ENCODE measurements at regions of chr4 and their contacts with region 1.

Region 1: DNA sequence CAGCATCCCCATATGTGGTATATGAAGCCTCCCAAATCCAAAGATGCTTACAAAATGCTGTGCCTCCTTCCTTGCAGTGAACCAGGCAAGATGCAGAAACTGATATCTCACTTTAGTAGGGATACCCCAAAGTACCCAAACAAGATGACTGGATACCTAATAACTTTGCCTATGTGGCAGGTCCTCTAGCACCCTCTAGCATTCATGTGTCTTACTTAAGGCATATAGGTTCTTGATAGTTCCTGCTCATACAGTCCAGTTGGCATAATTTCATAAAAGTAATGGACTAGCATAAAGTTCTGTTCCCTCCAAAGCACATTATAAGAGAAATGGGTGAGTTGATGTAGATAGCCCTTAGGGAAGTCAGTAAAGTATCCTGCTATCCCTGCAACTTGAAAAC is 36.8 kb upstream of the SPP1 start:
- DNase-seq: no peak
- H3K4me3 Mint-ChIP-seq: no peak overlapping the region
- H3K27ac Mint-ChIP-seq: no peak overlapping the region
- H3K4me1 Mint-ChIP-seq: no peaks in the 10 kb centered on the region
- H3K27me3 Mint-ChIP-seq: peaks cover 19% of the 10 kb centered on the region

Region 2: GRCh38 chr4:87838890-87839591 is 99.7 kb before region 1 on chr4:
- intact Hi-C with region 1: no loop called
- DNase-seq: no peak
- H3K4me3 Mint-ChIP-seq: no peak overlapping the region
- H3K27ac Mint-ChIP-seq: no peak overlapping the region
- H3K4me1 Mint-ChIP-seq: no peaks in the 10 kb centered on the region
- H3K27me3 Mint-ChIP-seq: peaks cover 27% of the 10 kb centered on the region

Region 3: GRCh38 chr4:87926554-87927098 is 12.1 kb before region 1 on chr4:
- intact Hi-C with region 1: loop called (anchors 1 kb)
- DNase-seq: no peak
- H3K4me3 Mint-ChIP-seq: no peak overlapping the region
- H3K27ac Mint-ChIP-seq: no peak overlapping the region
- H3K4me1 Mint-ChIP-seq: no peaks in the 10 kb centered on the region
- H3K27me3 Mint-ChIP-seq: peaks cover 4% of the 10 kb centered on the region